Activated naive CD4-positive, alpha-beta T cell treated with anti-CD3 and anti-CD28 coated beads for 36 hours (primary cell): ENCODE measurements at regions of chr15 and their contacts with region 1.

Region 1: GRCh38 chr15:89143503-89144162 is 55.4 kb downstream of the ABHD2 start:
- DNase-seq: no peak
- H3K4me3 Mint-ChIP-seq: no peak overlapping the region
- H3K27ac Mint-ChIP-seq: no peak overlapping the region
- H3K4me1 Mint-ChIP-seq: peaks cover 27% of the 10 kb centered on the region
- H3K27me3 Mint-ChIP-seq: no peaks in the 10 kb centered on the region

Region 2: DNA sequence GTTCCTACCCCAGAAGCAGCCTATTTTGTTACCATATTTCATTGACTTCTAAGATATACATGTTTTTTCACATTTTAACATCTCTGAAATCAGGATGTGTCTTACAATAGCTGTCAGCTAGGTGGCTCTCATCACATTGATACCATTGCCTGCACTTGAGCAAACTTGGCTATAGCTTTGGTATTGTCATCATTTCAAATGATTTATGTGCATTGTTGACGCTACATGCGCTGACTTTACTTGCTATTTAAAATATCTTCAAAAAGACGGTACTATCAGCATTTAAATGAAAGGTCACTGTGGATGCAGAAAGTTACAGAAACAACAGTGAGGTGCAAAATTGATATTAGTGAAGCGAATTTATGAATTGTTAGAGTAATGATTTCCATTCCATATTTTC is 109.3 kb before region 1 on chr15:
- CTCF ChIA-PET with region 1: no interaction called
- intact Hi-C with region 1: no loop called
- DNase-seq: no peak
- H3K4me3 Mint-ChIP-seq: no peak overlapping the region
- H3K27ac Mint-ChIP-seq: no peak overlapping the region
- H3K4me1 Mint-ChIP-seq: no peaks in the 10 kb centered on the region
- H3K27me3 Mint-ChIP-seq: no peaks in the 10 kb centered on the region

Region 3: DNA sequence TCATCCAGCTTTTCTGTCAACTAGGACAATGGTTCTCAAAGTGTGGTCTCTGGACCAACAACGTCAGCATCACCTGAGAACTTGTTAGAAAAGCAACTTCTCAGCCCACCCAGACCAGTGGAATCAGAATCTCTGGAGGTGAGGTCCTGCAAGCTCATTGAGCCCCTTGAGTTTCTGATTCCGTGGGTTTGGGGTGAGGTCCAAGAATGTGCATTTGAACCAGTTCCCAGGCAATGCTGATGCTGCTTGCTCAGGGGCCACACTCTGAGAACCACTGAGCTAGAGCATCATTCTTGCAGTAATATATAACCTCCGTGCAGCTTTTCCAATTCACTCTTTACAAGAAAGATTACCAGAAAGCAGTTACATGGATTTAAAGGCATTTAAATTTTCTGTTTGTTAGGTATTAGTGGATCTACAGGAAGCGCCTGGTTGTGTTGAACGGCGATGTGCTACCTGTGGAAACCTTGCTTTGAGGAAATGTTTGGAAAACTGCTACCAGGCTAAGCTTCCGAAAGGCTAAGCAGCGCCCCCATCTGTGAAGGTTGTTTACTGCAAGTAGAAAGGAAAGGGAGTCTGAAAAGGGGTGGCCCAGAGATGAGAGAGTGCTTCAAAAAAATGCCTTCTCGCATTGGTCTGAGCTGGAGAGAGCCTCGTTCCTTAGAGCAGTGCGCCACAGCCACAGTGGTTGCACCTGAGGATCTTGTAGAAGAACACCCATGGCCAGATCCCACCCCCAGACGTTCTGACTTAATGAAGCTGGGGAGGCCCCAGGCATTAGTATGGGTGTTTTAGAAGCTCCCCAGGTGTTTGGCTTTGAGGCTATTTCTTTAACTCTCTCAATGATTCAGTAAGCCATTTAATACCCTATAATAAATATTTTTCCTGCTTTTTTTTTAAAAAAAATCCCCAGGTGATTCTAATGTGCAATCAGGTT is 27.8 kb after region 1 on chr15:
- CTCF ChIA-PET with region 1: interaction called, 13 read pairs
- intact Hi-C with region 1: loop called (anchors 1 kb)
- DNase-seq: peak; percentile 68
- H3K4me3 Mint-ChIP-seq: no peak overlapping the region
- H3K27ac Mint-ChIP-seq: no peak overlapping the region
- H3K4me1 Mint-ChIP-seq: peaks cover 33% of the 10 kb centered on the region
- H3K27me3 Mint-ChIP-seq: no peaks in the 10 kb centered on the region

Region 4: DNA sequence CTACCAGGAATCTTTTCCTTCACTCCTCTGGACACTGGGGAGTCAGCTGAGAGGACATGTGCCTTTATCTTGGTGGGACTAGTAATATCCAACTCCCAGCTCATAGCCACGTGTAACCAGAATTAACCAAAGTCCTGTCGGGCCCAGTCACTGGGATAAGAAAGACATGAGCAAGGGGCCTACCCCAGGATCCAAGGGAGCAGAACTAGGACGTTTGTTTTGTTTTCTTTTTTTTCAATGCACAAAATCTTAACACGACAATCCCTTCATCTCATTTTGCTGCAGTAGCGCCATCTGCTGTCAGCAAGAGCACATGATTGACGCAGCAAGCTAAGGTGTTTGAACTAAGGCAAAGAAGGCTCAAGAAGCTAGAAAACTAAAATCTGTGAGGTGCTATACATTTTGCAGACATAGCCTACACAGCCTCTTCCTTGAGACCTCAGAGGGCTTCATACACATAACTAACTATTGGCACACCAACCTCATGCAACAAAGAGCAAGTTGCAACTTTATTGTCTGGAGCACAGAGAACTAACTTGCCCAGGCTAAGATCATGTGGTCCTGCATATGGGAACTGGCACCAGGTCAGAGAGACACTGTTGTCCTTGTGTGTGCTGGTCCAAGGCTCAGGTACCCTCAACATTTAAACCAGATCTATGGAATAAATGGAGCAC is 34.1 kb after region 1 on chr15:
- CTCF ChIA-PET with region 1: interaction called, 13 read pairs
- intact Hi-C with region 1: no loop called
- DNase-seq: peak; percentile 86
- H3K4me3 Mint-ChIP-seq: no peak overlapping the region
- H3K27ac Mint-ChIP-seq: peak overlapping the region; percentile 94
- H3K4me1 Mint-ChIP-seq: peaks cover 46% of the 10 kb centered on the region
- H3K27me3 Mint-ChIP-seq: no peaks in the 10 kb centered on the region